AG04449 (cell line): ENCODE measurements at regions of chr4 and their contacts with region 1.

Region 1: DNA sequence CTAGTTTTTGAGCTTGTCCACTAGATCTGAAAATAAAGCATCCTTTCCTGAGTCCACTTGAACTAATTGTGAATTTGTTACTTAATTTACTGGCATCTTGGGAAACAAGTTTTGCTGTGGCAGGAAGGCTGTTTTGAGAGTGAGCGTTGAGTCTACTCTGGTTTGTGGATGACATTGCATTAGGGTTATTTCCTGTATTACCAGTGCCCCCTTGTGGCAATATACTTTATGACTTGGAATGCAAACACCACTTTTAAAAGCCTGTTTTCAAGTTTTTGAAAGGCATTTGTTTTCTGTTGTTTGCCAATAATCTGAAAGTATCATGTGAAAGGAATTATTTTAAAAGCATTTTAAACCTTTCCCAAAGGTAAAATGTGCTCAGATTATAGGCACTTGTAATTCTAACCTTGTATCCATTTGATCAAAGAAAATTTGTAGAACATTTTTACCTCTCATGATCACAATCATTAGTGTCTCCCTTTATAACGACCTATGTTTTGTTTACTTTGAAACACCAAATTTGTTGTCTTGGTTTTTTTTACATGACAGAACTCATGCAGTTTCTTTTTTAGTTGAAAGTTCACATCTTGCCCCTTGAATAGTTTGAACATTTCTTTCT is 18.0 kb upstream of the CYP2U1 start:
- DNase-seq: no peak
- H3K4me3 ChIP-seq: no peak overlapping the region
- CTCF ChIP-seq: peak; percentile 62

Region 2: DNA sequence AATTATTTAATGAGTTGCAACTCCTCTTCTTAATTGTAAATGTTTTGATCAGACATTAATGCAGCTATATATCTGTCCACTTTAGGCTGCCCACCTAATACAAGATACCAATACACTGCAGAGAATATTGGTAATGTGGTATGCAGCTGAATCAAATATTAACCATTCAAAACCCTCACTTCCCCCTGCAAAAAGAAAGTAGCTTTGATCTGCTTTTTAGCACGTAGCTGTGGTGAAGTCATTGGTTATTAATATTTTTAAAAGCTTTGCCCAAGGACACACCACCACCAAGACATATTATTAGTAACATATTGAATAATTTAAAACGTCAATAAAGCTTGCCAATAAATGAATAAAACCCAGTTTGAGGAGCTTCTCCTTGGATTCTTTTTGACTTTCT is 10.7 kb before region 1 on chr4:
- CTCF ChIA-PET with region 1: interaction called, 34 read pairs
- POLR2A ChIA-PET with region 1: interaction called, 3 read pairs
- DNase-seq: no peak
- H3K4me3 ChIP-seq: no peak overlapping the region
- CTCF ChIP-seq: no peak

Region 3: DNA sequence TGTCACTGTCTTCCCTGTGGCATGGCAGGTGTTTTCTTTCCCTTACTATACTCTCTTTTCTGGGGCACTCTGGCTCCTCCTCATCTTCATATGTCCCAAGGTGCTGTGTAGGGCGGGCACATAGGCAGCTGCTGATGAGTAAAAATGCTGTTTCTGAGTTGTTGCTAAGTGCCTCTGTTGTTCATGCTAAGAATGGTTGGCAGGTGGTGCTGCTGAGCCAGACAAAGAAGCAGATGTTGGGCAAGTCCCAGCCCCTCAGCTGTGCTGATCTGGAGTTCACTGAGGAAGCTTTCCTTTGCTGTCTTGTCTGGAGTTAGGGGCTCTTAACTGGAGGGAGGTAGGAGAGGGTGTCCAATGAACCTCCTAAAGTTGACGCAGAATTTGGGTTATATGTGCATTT is 116.9 kb after region 1 on chr4:
- CTCF ChIA-PET with region 1: no interaction called
- POLR2A ChIA-PET with region 1: no interaction called
- DNase-seq: peak; percentile 21
- H3K4me3 ChIP-seq: no peak overlapping the region
- CTCF ChIP-seq: peak; percentile 69